Posterior vena cava (tissue), 2 donors: ENCODE measurements at regions of chr11 and their contacts with region 1.

Region 1: DNA sequence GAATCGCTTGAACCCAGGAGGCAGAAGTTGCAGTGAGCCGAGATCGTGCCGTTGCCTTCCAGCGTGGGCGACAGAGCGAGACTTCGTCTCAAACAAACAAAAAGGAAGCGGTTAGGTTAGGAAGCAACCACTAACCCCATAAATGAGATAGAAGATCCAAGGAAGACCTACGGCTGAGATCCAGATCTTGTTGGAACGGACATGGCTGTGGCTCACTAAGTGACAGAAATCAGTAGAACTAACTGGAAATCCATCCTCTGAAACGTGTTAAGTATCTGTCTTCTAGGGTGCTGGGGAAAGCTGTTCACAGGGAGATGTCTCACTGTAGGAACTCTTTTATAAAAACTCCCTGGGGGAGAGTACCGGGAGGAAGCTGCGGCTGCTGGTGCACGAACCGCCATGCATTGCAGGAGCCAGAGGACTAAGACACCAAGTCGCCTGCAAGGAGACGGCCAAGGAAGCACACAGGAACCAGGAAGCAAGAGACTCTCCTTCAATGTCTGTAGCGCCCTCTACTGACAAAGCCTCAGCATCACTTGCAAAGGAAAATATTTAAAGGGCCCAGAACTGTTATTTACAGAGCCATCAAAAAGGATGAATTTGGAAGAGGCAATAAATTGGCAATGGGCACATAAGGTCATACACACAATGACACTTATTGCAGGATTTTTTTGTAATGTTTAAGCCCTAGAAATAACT is 16.9 kb upstream of the SPTY2D1 start:
- DNase-seq: no peak

Region 2: DNA sequence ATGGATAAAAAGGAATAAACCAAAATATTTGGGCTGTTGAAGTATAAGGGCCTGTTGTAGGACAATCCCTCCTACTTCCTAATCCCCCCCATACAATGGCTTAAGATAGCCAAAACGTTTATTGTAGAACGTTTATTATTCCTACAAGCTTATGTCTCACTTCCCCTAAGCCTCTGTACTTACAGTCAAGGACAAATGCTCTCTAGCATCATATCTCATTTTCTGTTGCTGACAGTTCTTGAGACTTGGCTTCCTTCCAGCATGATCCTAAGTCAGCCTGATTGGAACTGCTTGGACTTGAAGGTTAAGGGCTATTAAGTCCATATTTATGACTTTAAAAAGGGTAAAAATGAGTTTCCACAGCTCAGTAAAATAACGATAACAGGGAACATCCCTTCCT is 42.6 kb before region 1 on chr11:
- intact Hi-C with region 1: loop called in 1 of 2 experiments (anchors 2 kb)
- DNase-seq: no peak

Region 3: GRCh38 chr11:18624161-18624560 is 26.8 kb before region 1 on chr11:
- intact Hi-C with region 1: no loop called
- DNase-seq: no peak